Transverse colon (tissue), 4 donors: ENCODE measurements at regions of chr11 and their contacts with region 1.

Region 1: DNA sequence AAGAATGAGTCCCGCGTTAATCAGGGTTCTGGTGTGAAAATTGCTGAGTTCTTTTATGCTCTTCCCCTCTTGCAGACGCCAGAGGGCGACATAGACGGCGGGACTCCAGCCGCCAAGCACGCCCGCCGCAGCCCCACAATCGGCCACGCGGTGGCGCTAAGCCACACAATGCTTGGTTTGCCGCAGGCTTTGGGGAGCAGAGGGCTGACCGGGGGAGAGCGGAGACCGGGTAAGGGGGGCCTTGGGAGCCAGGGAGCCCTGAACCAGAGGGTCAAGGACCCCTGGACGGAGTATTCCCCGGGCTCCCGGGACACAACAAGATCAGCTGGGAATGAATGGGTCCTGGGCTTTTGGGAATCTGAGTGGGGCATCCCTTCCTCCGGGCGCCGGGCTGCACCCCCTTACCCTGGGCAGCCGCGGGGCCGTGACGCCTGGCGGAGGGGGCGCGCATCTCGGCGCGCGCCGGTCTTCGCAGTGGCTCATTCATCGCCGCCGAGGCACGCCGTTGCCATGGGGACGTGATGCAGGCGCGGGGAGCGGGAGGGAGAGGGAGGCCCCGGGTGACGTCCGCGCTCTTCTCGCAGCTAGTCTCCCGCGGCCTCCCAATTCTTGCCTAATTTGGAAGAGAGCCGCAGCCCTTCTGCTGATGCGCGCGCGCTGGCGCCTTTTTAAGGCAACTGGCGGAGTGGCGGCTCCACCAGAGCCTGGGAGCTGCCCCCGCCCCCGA is 12.2 kb upstream of the NPAS4 start:
- DNase-seq: peak; percentile 90
- H3K4me3 ChIP-seq: peak overlapping the region in 3 of 4 donors; percentile 26 to 53 (median 31)
- H3K27ac ChIP-seq: peak overlapping the region; percentile 66 to 87 (median 82)
- H3K4me1 ChIP-seq: peaks cover 0 to 18% (median 9%) of the 10 kb centered on the region in 4 donors
- H3K27me3 ChIP-seq: peaks cover 24% of the 10 kb centered on the region
- CTCF ChIP-seq: peak; percentile 99 to 100 (median 100)
- EP300 ChIP-seq: peak; percentile 47
- POLR2A ChIP-seq: no peak

Region 2: DNA sequence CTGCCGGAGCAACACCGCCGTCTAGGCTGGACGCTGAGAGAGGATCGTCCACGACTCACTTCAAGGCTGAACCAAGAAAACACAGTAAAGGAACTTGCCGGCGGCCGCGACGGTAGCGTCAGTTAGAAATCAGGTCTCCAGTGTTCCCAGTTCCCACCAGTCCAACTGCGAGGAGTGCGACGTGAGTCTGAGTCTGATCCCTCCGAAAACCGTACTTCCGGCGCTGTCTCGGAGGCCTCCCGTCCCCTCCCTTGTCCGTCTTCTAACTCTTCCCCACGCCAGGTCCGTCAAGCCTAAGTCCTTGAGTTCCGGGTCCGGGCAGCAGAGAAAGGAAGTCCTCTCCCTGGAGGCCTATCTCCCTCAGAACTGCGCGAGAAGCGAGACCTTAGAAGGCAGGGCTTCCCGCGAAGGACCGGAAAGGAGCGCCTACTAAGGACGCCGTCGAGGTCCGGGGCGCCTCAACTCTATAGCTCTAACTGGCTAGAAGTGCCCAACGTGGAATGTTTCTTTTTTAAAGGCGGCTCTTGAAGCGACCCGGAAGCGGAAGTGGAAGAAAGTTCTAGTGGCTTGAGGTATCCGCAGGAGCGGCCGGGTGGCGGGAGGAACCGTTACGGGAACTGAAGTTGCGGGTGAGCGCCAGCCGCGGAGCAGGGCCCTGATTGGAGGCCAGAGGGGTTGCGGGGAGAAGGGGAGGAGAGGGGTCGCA is 406.6 kb before region 1 on chr11 and contains the starts of genes BANF1 and EIF1AD:
- in situ Hi-C with region 1: no loop called
- intact Hi-C with region 1: no loop called
- DNase-seq: peak; percentile 95
- H3K4me3 ChIP-seq: peak within 1 kb of the TSS; percentile 68 to 99 (median 82)
- H3K27ac ChIP-seq: peak within 1 kb of the TSS; percentile 95 to 98 (median 97)
- H3K4me1 ChIP-seq: peaks cover 9 to 24% (median 19%) of the 10 kb centered on the region in 4 donors
- H3K27me3 ChIP-seq: no peaks in the 10 kb centered on the region
- CTCF ChIP-seq: no peak
- EP300 ChIP-seq: no peak
- POLR2A ChIP-seq: peak; percentile 70
- total RNA-seq, gene BANF1: 27.9 to 79.7 (median 34.0) TPM
- total RNA-seq, gene EIF1AD: 14.6 to 82.6 (median 31.2) TPM

Region 3: DNA sequence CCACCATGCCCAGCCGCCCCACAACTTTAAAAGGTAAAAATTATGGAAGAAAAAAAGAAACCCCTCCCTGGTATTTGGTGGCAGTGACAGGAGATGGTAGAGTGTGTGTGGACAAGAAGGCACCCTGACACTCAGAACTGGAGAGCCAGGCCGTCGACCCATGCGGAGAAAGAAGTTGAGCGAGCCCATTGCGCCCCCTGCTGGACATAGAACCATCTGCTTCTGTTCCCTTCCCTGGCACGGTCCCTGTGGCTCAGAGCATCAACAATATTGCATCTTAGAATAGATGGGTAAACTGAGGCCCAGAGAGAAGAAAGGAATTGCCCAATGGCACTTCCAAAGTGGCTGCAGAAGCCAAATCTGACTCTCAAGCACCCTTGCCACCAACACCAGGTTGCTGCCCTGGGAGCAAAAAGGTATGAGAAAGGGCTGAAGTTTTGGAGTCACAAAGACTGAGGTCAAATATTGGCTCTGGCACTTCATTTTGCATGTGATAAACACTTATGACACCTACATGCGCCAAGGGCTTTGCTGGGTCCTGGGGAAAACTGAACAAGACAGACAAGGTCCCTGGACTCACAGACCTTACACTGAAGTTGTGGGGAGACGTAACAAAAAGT is 21.4 kb after region 1 on chr11:
- in situ Hi-C with region 1: no loop called
- intact Hi-C with region 1: loop called (anchors 1 kb)
- DNase-seq: peak; percentile 78
- H3K4me3 ChIP-seq: no peak overlapping the region
- H3K27ac ChIP-seq: no peak overlapping the region
- H3K4me1 ChIP-seq: no peaks in the 10 kb centered on the region
- H3K27me3 ChIP-seq: no peaks in the 10 kb centered on the region
- CTCF ChIP-seq: peak; percentile 78 to 89 (median 79)
- EP300 ChIP-seq: no peak
- POLR2A ChIP-seq: no peak

Region 4: DNA sequence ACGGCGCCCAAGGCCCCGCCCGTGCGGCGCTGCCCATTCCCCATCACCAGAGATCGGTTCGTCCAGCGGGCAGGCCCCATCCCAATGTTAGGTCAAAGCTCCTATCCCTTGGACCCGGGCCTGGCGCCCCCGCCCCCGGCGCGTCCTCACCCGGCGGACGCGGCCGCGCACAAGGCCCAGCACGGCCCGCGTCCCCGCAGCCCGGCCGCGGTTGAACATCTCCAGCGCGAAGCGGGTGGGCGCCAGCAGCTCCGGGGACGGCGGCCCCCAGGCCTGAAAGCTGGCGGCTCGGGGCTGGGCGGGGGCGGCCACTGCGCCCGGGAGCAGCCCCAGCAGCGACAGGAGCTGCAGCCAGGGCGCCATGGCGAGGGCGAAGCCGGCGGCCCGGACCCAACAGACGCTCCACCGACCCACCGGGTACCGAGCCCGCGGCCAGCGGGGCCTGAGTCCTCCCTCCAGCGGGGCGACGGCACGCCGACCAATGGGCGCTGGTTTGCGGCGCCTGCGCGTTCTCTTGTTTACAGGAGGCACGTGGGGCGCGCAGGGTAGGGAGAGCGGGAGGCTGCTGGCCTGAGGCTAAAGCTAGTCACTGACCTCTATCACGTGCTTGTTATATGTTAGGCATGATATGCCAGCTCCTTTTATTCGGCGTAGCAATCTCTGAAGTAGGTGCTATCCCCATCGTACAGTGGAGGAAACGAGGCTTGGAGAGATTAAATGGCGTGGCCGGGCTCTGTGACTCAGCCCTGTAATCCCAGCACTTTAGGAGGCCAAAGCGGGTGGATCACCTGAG is 159.7 kb after region 1 on chr11 and contains the start of gene CTSF:
- in situ Hi-C with region 1: loop called in 1 of 4 experiments (anchors 10 kb)
- intact Hi-C with region 1: no loop called
- DNase-seq: peak; percentile 85
- H3K4me3 ChIP-seq: peak within 1 kb of the TSS; percentile 55 to 72 (median 59)
- H3K27ac ChIP-seq: peak within 1 kb of the TSS in 3 of 4 donors; percentile 28 to 72 (median 53)
- H3K4me1 ChIP-seq: peaks cover 5 to 18% (median 13%) of the 10 kb centered on the region in 4 donors
- H3K27me3 ChIP-seq: peaks cover 17% of the 10 kb centered on the region
- CTCF ChIP-seq: no peak
- EP300 ChIP-seq: no peak
- POLR2A ChIP-seq: no peak
- total RNA-seq, gene CTSF: 23.5 to 80.6 (median 39.0) TPM

Region 5: DNA sequence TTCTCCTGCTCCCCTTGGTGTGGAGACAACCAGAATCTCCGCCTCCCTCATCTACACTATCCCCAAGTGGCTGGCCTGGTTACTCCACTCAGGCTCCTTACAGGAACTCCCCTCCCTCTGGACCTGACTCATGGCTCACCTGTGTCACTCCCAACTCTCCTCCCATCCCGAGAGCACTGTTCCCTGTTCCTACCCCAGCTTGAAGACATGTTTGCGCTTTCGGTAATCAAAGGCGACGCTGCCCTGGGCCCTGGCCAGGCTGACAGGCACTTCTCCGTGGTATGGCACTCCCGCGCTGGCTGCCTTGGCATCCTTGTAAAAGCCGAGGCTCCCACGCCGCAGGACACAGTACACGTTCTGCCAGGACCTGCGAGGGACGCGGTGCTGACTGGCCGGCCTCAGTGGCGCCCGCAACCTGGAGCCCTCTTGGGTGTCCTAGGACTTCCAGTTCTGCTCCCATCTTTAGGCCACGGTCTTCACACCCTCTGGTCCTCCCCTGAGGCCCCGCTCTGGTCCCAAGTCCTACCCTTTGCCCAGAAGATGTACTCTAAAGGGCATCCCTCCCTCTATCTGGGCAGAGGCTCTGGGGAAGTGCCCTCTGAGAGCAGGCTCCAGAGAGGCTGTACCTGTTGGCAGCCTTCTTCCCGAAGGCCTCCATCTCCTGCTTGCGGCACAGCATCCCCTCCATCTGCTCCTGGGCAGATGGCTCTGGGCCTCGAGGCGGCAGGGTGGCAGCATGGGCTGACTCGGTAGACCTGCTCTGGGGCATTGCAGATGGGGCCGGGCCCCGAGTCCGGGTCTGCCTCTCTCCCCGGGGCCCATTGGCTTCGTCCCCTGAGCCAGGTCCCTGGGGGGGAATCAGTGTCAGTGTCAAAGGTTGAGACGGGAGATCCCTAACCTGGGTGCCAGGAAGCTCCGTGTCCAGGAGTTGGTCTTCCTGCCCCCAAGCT is 278.4 kb after region 1 on chr11:
- in situ Hi-C with region 1: loop called in 2 of 4 experiments (anchors 5 to 10 kb)
- intact Hi-C with region 1: no loop called
- DNase-seq: no peak
- H3K4me3 ChIP-seq: no peak overlapping the region
- H3K27ac ChIP-seq: no peak overlapping the region
- H3K4me1 ChIP-seq: no peaks in the 10 kb centered on the region
- H3K27me3 ChIP-seq: no peaks in the 10 kb centered on the region
- CTCF ChIP-seq: no peak
- EP300 ChIP-seq: no peak
- POLR2A ChIP-seq: no peak

Region 6: GRCh38 chr11:66842896-66843775 is 434.5 kb after region 1 on chr11 and contains the start of gene RCE1:
- in situ Hi-C with region 1: loop called in 1 of 4 experiments (anchors 25 kb)
- intact Hi-C with region 1: no loop called
- DNase-seq: peak; percentile 91
- H3K4me3 ChIP-seq: peak within 1 kb of the TSS; percentile 82 to 98 (median 91)
- H3K27ac ChIP-seq: peak within 1 kb of the TSS; percentile 97 to 99 (median 99)
- H3K4me1 ChIP-seq: peaks cover 18 to 39% (median 24%) of the 10 kb centered on the region in 4 donors
- H3K27me3 ChIP-seq: no peaks in the 10 kb centered on the region
- CTCF ChIP-seq: no peak
- EP300 ChIP-seq: no peak
- POLR2A ChIP-seq: peak; percentile 94
- total RNA-seq, gene RCE1: 14.5 to 40.3 (median 37.4) TPM